ENCODE measurements at regions of chr2 and their contacts with region 1.

Region 1: GRCh38 chr2:143229952-143230351 is 100.7 kb downstream of the ARHGAP15 start:
- DNase-seq: no peak
- H3K4me3 ChIP-seq: no peak overlapping the region
- H3K27ac ChIP-seq: no peak overlapping the region
- H3K4me1 ChIP-seq: no peaks in the 10 kb centered on the region
- H3K27me3 ChIP-seq: no peaks in the 10 kb centered on the region
- CTCF ChIP-seq: no peak

Region 2: GRCh38 chr2:143162123-143162837 is 67.7 kb before region 1 on chr2:
- intact Hi-C with region 1: loop called (anchors 10 kb)
- DNase-seq: peak in 1 of 2 donors; percentile 23
- H3K4me3 ChIP-seq: no peak overlapping the region
- H3K27ac ChIP-seq: no peak overlapping the region
- H3K4me1 ChIP-seq: peaks cover 0 to 14% (median 0%) of the 10 kb centered on the region in 4 donors
- H3K27me3 ChIP-seq: no peaks in the 10 kb centered on the region
- CTCF ChIP-seq: peak; percentile 65 to 69